Activated B cell treated with CpG ODN at 0.5 μM for 24 hours (primary cell): ENCODE measurements at regions of chr19 and their contacts with region 1.

Region 1: DNA sequence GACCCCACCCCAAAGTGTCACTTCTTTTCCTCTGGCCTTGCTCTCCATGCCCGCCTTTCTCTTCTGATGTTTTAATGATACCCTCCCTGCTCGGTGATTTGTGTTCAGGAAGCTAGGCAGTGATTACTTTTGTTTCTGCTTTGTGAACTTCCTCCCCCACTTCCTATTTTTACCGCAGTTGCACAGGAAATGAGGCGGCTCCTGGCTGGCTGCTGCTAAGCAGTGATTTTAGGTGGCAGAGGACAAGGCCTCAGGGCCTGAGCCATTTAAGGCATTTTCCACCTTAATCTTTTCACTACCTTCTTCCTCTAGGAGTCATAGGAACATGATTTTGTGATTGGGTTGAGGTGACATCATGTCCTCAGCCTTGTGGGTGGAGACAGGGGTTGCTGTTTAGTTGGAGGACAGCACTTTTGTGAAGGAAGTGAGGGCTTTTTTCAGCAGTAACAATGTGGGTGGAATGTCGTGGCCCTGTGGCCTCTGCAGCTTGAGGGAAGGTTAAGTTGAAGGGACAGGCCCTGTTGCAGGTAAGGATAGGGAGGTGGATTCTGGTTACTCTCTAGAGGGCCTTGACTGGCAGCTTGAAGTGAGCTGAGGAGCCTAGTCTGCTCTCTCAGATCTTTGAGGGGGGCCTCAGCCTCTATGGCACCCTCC is 15.7 kb downstream of the GARRE1 start:
- DNase-seq: peak; percentile 47
- ATAC-seq: peak; percentile 87
- H3K4me3 Mint-ChIP-seq: peak overlapping the region; percentile 77
- H3K27ac Mint-ChIP-seq: peak overlapping the region; percentile 95
- H3K4me1 Mint-ChIP-seq: peaks cover 85% of the 10 kb centered on the region
- H3K27me3 Mint-ChIP-seq: no peaks in the 10 kb centered on the region
- CTCF ChIP-seq: no peak

Region 2: GRCh38 chr19:34120846-34121639 is 149.1 kb before region 1 on chr19:
- CTCF ChIA-PET with region 1: no interaction called
- POLR2A ChIA-PET with region 1: no interaction called
- intact Hi-C with region 1: no loop called
- DNase-seq: no peak
- ATAC-seq: peak; percentile 56
- H3K4me3 Mint-ChIP-seq: no peak overlapping the region
- H3K27ac Mint-ChIP-seq: no peak overlapping the region
- H3K4me1 Mint-ChIP-seq: no peaks in the 10 kb centered on the region
- H3K27me3 Mint-ChIP-seq: peaks cover 12% of the 10 kb centered on the region
- CTCF ChIP-seq: no peak

Region 3: GRCh38 chr19:34308381-34309367 is 38.6 kb after region 1 on chr19:
- CTCF ChIA-PET with region 1: no interaction called
- POLR2A ChIA-PET with region 1: interaction called, 16 read pairs
- intact Hi-C with region 1: no loop called
- DNase-seq: no peak
- ATAC-seq: peak; percentile 9
- H3K4me3 Mint-ChIP-seq: peak overlapping the region; percentile 5
- H3K27ac Mint-ChIP-seq: peak overlapping the region; percentile 73
- H3K4me1 Mint-ChIP-seq: peaks cover 60% of the 10 kb centered on the region
- H3K27me3 Mint-ChIP-seq: no peaks in the 10 kb centered on the region
- CTCF ChIP-seq: no peak

Region 4: GRCh38 chr19:34317311-34317927 is 47.3 kb after region 1 on chr19:
- CTCF ChIA-PET with region 1: interaction called, 4 read pairs
- POLR2A ChIA-PET with region 1: interaction called, 7 read pairs
- intact Hi-C with region 1: loop called (anchors 5 kb)
- DNase-seq: no peak
- ATAC-seq: no peak
- H3K4me3 Mint-ChIP-seq: peak overlapping the region; percentile 42
- H3K27ac Mint-ChIP-seq: peak overlapping the region; percentile 46
- H3K4me1 Mint-ChIP-seq: peaks cover 57% of the 10 kb centered on the region
- H3K27me3 Mint-ChIP-seq: no peaks in the 10 kb centered on the region
- CTCF ChIP-seq: no peak

Region 5: DNA sequence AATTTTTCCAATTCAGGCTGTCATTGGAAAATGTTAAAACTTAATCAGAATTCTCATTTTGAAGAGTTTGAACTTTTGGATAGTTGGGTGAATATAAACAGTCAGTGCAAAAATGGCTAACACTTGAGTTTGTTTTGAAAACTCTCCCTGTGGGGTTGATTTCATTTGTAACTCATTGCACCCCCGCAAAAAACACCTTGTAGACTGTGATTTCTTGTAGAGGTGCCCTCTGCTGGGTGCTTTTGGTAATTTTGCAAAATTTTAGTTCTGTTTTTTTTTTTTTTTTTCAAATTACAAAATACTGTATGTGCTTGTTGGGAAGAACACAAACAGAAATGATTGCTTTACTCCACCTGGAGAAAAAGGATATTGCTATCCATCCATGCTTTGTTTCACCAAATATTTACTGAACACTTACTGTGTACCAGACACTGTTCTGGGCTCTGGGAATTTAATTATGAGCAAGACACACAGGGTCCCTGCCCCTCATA is 66.7 kb after region 1 on chr19:
- CTCF ChIA-PET with region 1: interaction called, 3 read pairs
- POLR2A ChIA-PET with region 1: no interaction called
- intact Hi-C with region 1: loop called (anchors 1 kb)
- DNase-seq: no peak
- ATAC-seq: no peak
- H3K4me3 Mint-ChIP-seq: no peak overlapping the region
- H3K27ac Mint-ChIP-seq: no peak overlapping the region
- H3K4me1 Mint-ChIP-seq: peaks cover 5% of the 10 kb centered on the region
- H3K27me3 Mint-ChIP-seq: no peaks in the 10 kb centered on the region
- CTCF ChIP-seq: peak; percentile 20